PC-3 (cell line): ENCODE measurements at regions of chr12 and their contacts with region 1.

Region 1: DNA sequence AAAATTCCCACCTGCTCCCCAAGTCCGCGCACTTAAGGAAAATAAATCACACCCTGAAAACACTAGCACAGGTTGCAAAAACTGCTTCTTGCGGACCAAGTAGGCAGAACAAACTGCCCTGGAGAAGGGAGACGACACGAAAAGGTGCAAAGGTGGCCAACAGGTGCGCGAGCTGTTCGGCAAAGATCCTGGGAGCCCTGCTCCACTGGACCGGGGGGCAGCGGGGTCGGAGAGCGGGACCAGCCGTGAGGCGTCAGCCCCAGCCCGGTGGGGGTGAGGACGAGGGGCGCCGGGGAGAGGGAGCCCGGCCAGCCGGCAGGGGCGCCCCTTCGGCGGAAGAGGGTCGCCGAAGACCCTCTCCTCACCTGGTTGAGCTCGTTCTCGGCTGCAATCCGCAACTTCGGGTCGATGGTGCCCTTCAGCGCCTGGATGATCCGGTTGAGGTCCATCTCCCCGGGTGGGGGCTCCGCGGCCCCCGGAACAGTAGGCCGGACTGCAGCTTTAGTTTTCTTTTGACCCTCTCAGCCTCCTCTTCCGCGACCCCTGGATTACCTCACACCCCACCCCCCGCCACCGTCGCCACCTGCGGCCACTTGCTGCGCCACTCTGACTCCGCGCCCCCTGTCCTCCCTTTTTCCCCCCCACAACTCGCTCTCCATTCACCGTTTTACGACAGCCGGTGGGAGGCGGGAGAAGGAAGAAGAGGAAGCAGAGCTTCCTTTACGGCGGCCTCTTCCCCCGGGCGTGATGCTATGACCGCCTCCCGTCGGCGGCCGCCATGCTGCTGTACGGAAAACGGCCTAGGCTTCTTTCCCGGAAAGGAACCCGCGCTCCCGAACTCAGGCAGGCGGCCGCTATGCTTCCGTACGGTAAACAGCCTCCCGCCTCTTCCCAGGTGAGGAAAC is at the start of gene IPO8:
- DNase-seq: peak; percentile 85
- ATAC-seq: peak; percentile 56
- H3K4me3 ChIP-seq: peak within 1 kb of the TSS; percentile 93
- H3K27ac ChIP-seq: no peak within 1 kb of the TSS
- H3K4me1 ChIP-seq: peaks cover 39% of the 10 kb centered on the region; the same call in 1 of the 2 replicates
- H3K27me3 ChIP-seq: no peaks in the 10 kb centered on the region
- CTCF ChIP-seq: peak; percentile 32; the same call in 1 of the 2 replicates
- total RNA-seq, gene IPO8: 13.3 and 19.6 TPM in 2 replicates

Region 2: GRCh38 chr12:30725739-30726138 is 30.3 kb after region 1 on chr12:
- CTCF ChIA-PET with region 1: interaction called, 18 read pairs
- POLR2A ChIA-PET with region 1: no interaction called
- intact Hi-C with region 1: no loop called
- DNase-seq: peak; percentile 67
- ATAC-seq: peak; percentile 91
- H3K4me3 ChIP-seq: no peak overlapping the region
- H3K27ac ChIP-seq: peak overlapping the region; percentile 4; the same call in 1 of the 2 replicates
- H3K4me1 ChIP-seq: peaks cover 17% of the 10 kb centered on the region
- H3K27me3 ChIP-seq: no peaks in the 10 kb centered on the region
- CTCF ChIP-seq: no peak

Region 3: GRCh38 chr12:30795410-30796312 is 100.2 kb after region 1 on chr12:
- CTCF ChIA-PET with region 1: no interaction called
- POLR2A ChIA-PET with region 1: no interaction called
- intact Hi-C with region 1: loop called (anchors 1 kb)
- DNase-seq: peak; percentile 77
- ATAC-seq: peak; percentile 25
- H3K4me3 ChIP-seq: peak overlapping the region; percentile 80
- H3K27ac ChIP-seq: peak overlapping the region; percentile 100
- H3K4me1 ChIP-seq: peaks cover 58% of the 10 kb centered on the region
- H3K27me3 ChIP-seq: no peaks in the 10 kb centered on the region
- CTCF ChIP-seq: no peak

Region 4: DNA sequence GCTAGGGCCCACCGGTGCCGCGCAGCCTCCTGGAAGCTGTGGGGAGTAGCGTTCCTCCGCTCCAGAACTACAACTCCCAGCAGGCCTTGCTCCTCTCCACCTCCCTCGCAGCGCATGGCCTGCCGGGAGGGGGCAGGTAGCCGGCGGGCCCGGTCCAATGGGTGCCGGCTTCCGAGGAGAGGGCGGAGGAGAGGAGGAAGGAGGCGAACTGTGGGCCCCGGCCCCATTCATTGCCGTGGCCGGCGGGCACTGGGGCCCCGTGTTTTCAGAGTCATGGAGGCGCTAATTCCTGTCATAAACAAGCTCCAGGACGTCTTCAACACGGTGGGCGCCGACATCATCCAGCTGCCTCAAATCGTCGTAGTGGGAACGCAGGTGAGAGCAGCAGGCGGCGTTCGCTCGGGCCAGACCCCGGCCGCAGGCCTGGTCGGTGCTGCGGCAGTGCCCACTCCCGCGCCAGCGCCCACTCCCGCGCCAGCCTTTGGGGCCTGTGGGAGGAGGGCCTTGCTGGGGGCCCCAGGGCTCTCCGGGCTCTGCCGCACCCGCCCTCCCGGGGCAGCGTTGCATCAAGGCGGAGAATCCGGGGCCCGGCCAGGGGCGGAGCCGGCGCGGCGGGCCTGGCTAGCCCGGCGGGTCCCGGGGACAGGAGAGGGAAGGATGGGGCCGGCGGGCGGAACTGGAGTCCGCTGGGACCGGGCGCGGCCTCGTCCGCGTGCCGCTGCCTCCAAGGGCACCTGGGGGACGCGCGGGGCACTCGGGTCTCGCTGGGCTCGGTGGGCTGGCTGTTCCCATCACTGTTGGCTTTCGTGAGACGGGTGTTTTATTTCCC is 1983.9 kb after region 1 on chr12 and contains the start of gene DNM1L:
- CTCF ChIA-PET with region 1: interaction called, 14 read pairs
- POLR2A ChIA-PET with region 1: no interaction called
- intact Hi-C with region 1: no loop called
- DNase-seq: peak; percentile 93
- ATAC-seq: peak; percentile 93
- H3K4me3 ChIP-seq: peak within 1 kb of the TSS; percentile 88
- H3K27ac ChIP-seq: peak within 1 kb of the TSS; percentile 36
- H3K4me1 ChIP-seq: peaks cover 5% of the 10 kb centered on the region
- H3K27me3 ChIP-seq: no peaks in the 10 kb centered on the region
- CTCF ChIP-seq: no peak
- total RNA-seq, gene DNM1L: 29.9 and 38.7 TPM in 2 replicates